ENCODE measurements at regions of chr12 and their contacts with region 1.

Region 1: DNA sequence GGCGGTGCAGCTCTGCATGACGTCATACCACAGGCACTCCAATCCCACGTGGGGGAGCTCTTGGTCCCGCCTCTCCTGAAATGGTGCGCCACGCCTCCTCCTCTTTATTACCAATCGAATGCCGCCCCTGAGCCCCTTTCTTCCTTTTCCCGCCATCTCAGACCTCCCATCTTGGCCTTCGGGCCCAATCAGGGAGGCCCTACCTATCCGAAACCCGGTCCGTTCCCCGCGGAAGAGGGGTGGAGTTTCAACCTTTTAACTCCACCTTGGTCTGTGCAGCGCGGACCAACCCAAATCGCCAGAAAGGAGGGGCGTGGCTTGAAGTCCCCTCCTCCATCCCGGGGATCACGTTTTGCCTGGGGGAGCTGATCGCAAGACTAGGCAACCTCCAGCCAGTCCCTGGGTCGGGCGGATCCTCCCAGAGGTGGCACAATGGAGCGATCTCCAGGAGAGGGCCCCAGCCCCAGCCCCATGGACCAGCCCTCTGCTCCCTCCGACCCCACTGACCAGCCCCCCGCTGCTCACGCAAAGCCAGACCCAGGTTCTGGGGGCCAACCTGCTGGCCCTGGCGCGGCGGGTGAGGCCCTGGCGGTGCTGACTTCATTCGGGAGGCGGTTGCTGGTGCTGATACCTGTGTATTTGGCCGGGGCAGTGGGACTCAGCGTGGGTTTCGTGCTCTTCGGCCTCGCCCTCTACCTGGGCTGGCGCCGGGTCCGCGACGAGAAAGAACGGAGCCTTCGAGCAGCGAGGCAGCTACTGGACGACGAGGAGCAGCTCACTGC is at the start of gene ESYT1:
- DNase-seq: peak; percentile 99
- ATAC-seq: peak; percentile 85
- H3K4me3 ChIP-seq: peak within 1 kb of the TSS; percentile 88 to 95 (median 92)
- H3K4me3 Mint-ChIP-seq: peak within 1 kb of the TSS; percentile 100
- H3K27ac ChIP-seq: peak within 1 kb of the TSS; percentile 76 to 80
- H3K27ac Mint-ChIP-seq: peak within 1 kb of the TSS; percentile 98
- H3K4me1 ChIP-seq: peaks cover 46 to 54% of the 10 kb centered on the region in 2 donors
- H3K4me1 Mint-ChIP-seq: peaks cover 68% of the 10 kb centered on the region
- H3K27me3 ChIP-seq: no peaks in the 10 kb centered on the region
- H3K27me3 Mint-ChIP-seq: no peaks in the 10 kb centered on the region
- CTCF ChIP-seq: no peak
- total RNA-seq, gene ESYT1: 151 and 154 TPM in 2 replicates

Region 2: DNA sequence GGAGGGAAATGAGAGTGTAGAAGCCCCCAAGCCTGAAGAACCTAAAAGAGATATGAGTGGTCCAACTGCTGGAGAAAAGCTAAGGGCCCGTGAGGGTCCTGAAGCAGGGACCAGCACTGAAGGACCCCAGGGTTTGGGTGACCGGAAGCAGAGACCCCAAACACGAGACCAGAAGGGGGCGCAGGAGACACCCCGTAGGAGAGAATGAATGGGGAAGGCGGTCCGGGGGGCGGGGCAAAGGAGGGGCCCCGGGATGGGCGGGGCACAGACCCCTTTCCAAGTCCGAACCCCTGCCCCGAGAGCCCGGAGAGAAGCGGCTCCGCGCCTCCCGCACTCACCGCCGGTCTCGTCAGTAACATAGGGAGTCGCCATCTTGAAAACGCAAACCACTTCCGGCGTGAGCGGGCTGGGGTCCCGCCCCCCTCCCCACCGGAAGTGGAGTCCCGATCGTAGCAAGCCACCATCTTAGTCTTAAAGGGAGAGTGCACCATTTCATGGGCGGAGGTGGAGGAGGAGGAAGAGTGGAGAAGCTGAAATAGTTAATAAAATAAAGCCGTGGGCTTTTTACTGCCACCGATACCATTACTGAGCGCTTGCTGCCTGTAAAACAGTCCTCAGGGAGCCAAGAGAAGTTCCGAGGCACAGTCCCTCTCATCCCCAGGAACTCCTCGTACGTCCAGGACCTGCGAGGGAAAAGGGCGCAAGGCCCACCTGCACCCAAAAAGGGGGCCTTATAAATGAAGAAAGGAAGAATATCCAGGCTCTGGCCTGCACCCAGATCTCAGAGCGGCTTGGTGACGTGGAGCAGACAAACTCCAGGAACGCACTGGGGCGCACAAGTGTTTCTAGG is 201.1 kb before region 1 on chr12:
- CTCF ChIA-PET with region 1: no interaction called
- POLR2A ChIA-PET with region 1: no interaction called
- intact Hi-C with region 1: no loop called
- DNase-seq: peak; percentile 94
- ATAC-seq: peak; percentile 50
- H3K4me3 ChIP-seq: peak overlapping the region; percentile 88 to 100 (median 98)
- H3K4me3 Mint-ChIP-seq: peak overlapping the region; percentile 94
- H3K27ac ChIP-seq: peak overlapping the region; percentile 67 to 92
- H3K27ac Mint-ChIP-seq: peak overlapping the region; percentile 97
- H3K4me1 ChIP-seq: peaks cover 33 to 45% of the 10 kb centered on the region in 2 donors
- H3K4me1 Mint-ChIP-seq: peaks cover 54% of the 10 kb centered on the region
- H3K27me3 ChIP-seq: no peaks in the 10 kb centered on the region
- H3K27me3 Mint-ChIP-seq: no peaks in the 10 kb centered on the region
- CTCF ChIP-seq: peak; percentile 87

Region 3: GRCh38 chr12:56143870-56144269 is 15.8 kb after region 1 on chr12:
- CTCF ChIA-PET with region 1: interaction called, 15 read pairs
- POLR2A ChIA-PET with region 1: interaction called, 4 read pairs
- intact Hi-C with region 1: no loop called
- DNase-seq: no peak
- ATAC-seq: no peak
- H3K4me3 ChIP-seq: no peak overlapping the region
- H3K4me3 Mint-ChIP-seq: no peak overlapping the region
- H3K27ac ChIP-seq: no peak overlapping the region
- H3K27ac Mint-ChIP-seq: peak overlapping the region; percentile 67
- H3K4me1 ChIP-seq: no peaks in the 10 kb centered on the region
- H3K4me1 Mint-ChIP-seq: peaks cover 9% of the 10 kb centered on the region
- H3K27me3 ChIP-seq: no peaks in the 10 kb centered on the region
- H3K27me3 Mint-ChIP-seq: no peaks in the 10 kb centered on the region
- CTCF ChIP-seq: no peak

Region 4: DNA sequence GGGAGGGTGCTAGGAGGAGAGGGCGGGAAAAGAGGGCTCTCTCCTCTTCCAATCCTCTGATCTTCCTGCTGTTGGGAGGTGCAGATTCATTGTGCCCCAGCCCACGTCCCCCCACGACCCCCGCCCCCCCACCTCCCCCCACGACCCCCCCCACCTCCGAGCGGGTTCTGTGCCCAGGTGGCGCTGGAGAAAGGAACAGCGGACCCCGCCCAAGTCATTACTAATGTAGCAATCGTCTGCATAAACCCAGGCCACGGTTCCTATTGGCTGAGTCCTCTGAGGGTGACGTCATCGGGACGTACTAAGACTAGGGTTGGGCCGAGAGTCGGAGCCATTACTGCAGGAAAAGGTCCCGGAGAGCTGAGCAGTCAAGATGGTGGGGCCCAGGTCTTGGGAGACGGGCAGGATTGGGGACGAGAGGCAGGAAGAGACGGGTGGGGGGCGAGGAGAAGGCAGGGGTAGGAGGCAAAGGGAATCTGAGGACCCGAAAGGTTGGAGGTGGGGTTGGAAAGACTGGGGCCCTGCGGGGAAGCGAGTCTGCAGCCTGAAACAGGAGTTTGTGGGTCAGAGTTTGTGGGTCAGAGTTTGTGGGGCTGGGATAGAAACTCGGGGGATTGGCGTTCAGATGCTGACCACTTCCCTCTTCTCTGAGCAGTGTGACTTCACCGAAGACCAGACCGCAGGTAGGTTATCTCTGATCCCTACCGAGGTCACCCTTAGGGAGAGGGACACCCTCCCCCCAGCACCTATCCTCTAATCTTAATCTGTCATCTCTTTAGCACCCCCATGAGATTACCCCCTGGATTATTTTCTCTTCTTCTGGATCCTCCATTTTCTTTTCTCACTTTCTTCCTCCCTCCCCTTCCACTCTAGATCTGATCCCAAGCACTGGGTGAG is 30.2 kb after region 1 on chr12 and contains the start of gene MYL6:
- CTCF ChIA-PET with region 1: interaction called, 17 read pairs
- POLR2A ChIA-PET with region 1: interaction called, 44 read pairs
- intact Hi-C with region 1: loop called (anchors 1 kb)
- DNase-seq: peak; percentile 96
- ATAC-seq: peak; percentile 87
- H3K4me3 ChIP-seq: peak within 1 kb of the TSS; percentile 80 to 97 (median 94)
- H3K4me3 Mint-ChIP-seq: peak within 1 kb of the TSS; percentile 96
- H3K27ac ChIP-seq: peak within 1 kb of the TSS; percentile 88 to 97
- H3K27ac Mint-ChIP-seq: peak within 1 kb of the TSS; percentile 97
- H3K4me1 ChIP-seq: peaks cover 20 to 40% of the 10 kb centered on the region in 2 donors
- H3K4me1 Mint-ChIP-seq: peaks cover 44% of the 10 kb centered on the region
- H3K27me3 ChIP-seq: no peaks in the 10 kb centered on the region
- H3K27me3 Mint-ChIP-seq: no peaks in the 10 kb centered on the region
- CTCF ChIP-seq: no peak
- total RNA-seq, gene MYL6: 645 and 675 TPM in 2 replicates

Region 5: DNA sequence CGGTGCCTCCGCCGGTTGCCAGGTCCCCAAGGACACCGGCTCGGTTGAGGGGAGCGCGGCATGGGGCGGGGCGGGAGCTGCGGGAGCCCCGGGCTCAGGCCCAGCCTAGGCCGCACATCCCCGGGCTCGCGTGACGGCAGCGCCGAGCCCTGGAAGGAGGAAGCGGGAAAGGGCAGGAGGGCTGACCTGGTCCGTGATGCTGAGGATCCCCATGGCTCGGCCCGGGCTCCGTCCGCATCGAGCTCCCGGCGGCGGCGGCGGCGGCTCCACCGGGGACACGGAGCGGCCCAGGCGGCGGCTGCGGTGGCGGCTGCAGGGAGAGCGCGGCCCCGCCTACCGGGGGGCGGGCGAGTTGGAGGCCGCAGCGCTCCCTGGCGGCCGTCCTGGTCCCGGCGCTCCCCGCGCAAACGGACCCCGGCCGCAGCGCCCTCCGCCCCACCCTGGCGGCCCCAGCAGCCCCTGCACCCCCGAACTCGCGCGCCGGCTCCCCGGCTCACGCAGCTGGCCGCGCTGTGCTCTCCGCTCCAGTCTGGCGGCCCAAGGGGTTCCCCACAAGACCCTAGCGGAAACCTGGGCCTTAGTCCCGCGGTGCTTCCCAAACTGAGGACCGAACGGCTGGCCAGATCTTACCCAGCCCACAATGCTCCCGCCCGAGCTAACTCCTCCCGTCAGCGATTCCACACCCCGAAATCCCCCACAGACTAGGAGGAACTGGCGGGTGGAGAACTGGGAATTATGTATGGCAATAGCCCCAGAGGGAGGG is 130.2 kb after region 1 on chr12 and contains the start of gene ANKRD52:
- CTCF ChIA-PET with region 1: interaction called, 3 read pairs
- POLR2A ChIA-PET with region 1: no interaction called
- intact Hi-C with region 1: loop called (anchors 2 kb)
- DNase-seq: peak; percentile 93
- ATAC-seq: peak; percentile 95
- H3K4me3 ChIP-seq: peak within 1 kb of the TSS; percentile 32 to 99 (median 77)
- H3K4me3 Mint-ChIP-seq: peak within 1 kb of the TSS; percentile 90
- H3K27ac ChIP-seq: peak within 1 kb of the TSS; percentile 60 to 81
- H3K27ac Mint-ChIP-seq: peak within 1 kb of the TSS; percentile 92
- H3K4me1 ChIP-seq: peaks cover 16 to 21% of the 10 kb centered on the region in 2 donors
- H3K4me1 Mint-ChIP-seq: peaks cover 18% of the 10 kb centered on the region
- H3K27me3 ChIP-seq: no peaks in the 10 kb centered on the region
- H3K27me3 Mint-ChIP-seq: no peaks in the 10 kb centered on the region
- CTCF ChIP-seq: peak; percentile 78
- total RNA-seq, gene ANKRD52: 46.5 and 54.6 TPM in 2 replicates

Region 6: DNA sequence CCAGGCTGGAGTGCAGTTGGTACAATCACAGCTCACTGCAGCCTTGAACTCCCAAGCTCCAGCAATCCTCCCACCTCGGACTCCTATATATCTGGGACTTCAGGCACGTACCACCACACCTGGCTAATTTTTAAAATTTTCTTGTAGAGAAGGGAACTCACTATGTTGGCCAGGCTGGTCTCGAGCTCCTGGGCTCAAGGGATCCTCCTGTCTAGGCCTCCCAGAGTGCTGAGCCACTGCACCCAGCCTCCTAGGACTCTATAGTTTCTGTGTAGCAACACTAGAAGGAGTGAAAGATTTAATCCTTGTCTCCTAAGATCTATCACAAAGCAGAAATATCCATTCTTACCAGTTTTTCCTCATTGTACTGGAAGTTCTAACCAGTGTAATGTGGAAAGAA is 238.9 kb after region 1 on chr12:
- CTCF ChIA-PET with region 1: no interaction called
- POLR2A ChIA-PET with region 1: no interaction called
- intact Hi-C with region 1: no loop called
- DNase-seq: no peak
- ATAC-seq: no peak
- H3K4me3 ChIP-seq: no peak overlapping the region
- H3K4me3 Mint-ChIP-seq: no peak overlapping the region
- H3K27ac ChIP-seq: no peak overlapping the region
- H3K27ac Mint-ChIP-seq: no peak overlapping the region
- H3K4me1 ChIP-seq: no peaks in the 10 kb centered on the region
- H3K4me1 Mint-ChIP-seq: peaks cover 2% of the 10 kb centered on the region
- H3K27me3 ChIP-seq: no peaks in the 10 kb centered on the region
- H3K27me3 Mint-ChIP-seq: no peaks in the 10 kb centered on the region
- CTCF ChIP-seq: no peak

Region 7: GRCh38 chr12:56448860-56449621 is 321.0 kb after region 1 on chr12 and contains the start of gene TIMELESS:
- CTCF ChIA-PET with region 1: no interaction called
- POLR2A ChIA-PET with region 1: interaction called, 4 read pairs
- intact Hi-C with region 1: loop called (anchors 1 kb)
- DNase-seq: peak; percentile 95
- ATAC-seq: peak; percentile 96
- H3K4me3 ChIP-seq: peak within 1 kb of the TSS; percentile 69 to 98 (median 83)
- H3K4me3 Mint-ChIP-seq: peak within 1 kb of the TSS; percentile 90
- H3K27ac ChIP-seq: peak within 1 kb of the TSS; percentile 53 to 85
- H3K27ac Mint-ChIP-seq: peak within 1 kb of the TSS; percentile 92
- H3K4me1 ChIP-seq: peaks cover 10 to 12% of the 10 kb centered on the region in 2 donors
- H3K4me1 Mint-ChIP-seq: peaks cover 23% of the 10 kb centered on the region
- H3K27me3 ChIP-seq: no peaks in the 10 kb centered on the region
- H3K27me3 Mint-ChIP-seq: no peaks in the 10 kb centered on the region
- CTCF ChIP-seq: no peak
- total RNA-seq, gene TIMELESS: 44.4 and 46.6 TPM in 2 replicates

Measured in B cell (primary cell).